ENCODE measurements at regions of chr12 and their contacts with region 1.

Region 1: GRCh38 chr12:112382232-112382796 is at the start of gene HECTD4:
- DNase-seq: peak; percentile 95 to 99 (median 98)
- H3K4me3 ChIP-seq: peak within 1 kb of the TSS; percentile 70 to 99 (median 90)
- H3K27ac ChIP-seq: peak within 1 kb of the TSS; percentile 4 to 95 (median 89)
- H3K27me3 ChIP-seq: no peaks in the 10 kb centered on the region
- CTCF ChIP-seq: peak in 34 of 56 donors; percentile 5 to 53 (median 32)
- total RNA-seq, gene HECTD4: 133 to 246 (median 192) TPM

Region 2: DNA sequence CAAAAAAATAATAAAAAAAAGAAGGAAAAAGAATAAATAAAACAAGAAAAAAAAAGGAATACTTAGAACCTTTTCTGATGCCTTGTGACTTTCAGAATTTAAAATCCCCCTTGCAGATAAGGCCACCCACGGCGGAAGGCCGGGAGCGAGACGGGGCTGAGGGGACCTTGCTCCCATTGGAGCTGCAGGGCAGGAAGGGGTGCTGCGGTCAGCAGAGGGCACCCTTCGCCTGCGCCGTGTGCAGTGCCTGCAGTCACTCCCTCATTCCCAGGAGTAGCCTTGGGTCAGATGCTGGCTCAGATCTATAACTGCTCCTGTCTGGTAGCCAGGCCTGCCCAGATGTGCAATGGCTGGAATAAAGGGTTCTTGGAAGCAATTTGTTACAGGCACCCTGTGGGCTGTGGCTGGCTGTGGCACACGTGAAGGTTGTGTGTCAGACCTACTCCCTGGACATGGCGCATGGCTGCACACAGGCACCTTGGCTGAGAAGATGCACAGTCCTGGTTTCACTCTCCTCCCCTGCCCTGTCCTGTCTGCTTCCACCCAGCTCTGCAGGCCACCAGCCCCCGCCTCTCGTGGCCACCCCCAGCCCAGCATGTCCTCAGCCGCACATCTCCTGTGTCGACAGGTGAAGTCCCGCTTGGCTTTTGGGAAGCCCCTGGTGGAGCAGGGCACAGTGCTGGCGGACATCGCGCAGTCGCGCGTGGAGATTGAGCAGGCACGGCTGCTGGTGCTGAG is 629.0 kb before region 1 on chr12:
- intact Hi-C with region 1: loop called in 1 of 2 experiments (anchors 10 kb)
- DNase-seq: peak in 8 of 10 donors; percentile 47 to 76 (median 57)
- H3K4me3 ChIP-seq: no peak overlapping the region
- H3K27ac ChIP-seq: peak overlapping the region in 11 of 59 donors; percentile 0 to 63 (median 32)
- H3K27me3 ChIP-seq: no peaks in the 10 kb centered on the region
- CTCF ChIP-seq: peak; percentile 21 to 92 (median 76)

Region 3: DNA sequence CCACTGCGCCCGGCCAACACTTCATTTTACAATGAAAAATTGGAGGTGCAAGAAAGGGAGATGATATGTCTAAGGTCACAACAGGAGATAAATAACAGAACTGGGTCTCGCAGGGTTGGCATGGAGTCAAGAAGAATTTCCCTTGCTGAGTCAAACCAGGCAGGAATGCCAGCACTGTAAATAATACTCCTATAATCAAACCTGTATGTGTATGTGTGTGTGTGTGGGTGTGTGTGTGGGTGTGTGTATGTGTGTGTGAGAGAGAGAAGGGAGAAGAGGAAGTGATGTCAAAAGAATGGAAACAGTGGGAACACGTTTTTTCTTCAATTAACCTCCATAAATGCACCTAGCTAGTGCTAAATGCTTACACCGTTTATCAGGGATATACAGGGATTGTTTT is 439.8 kb before region 1 on chr12:
- intact Hi-C with region 1: loop called (anchors 5 to 10 kb)
- DNase-seq: no peak
- H3K4me3 ChIP-seq: no peak overlapping the region
- H3K27ac ChIP-seq: no peak overlapping the region
- H3K27me3 ChIP-seq: no peaks in the 10 kb centered on the region
- CTCF ChIP-seq: no peak

Region 4: DNA sequence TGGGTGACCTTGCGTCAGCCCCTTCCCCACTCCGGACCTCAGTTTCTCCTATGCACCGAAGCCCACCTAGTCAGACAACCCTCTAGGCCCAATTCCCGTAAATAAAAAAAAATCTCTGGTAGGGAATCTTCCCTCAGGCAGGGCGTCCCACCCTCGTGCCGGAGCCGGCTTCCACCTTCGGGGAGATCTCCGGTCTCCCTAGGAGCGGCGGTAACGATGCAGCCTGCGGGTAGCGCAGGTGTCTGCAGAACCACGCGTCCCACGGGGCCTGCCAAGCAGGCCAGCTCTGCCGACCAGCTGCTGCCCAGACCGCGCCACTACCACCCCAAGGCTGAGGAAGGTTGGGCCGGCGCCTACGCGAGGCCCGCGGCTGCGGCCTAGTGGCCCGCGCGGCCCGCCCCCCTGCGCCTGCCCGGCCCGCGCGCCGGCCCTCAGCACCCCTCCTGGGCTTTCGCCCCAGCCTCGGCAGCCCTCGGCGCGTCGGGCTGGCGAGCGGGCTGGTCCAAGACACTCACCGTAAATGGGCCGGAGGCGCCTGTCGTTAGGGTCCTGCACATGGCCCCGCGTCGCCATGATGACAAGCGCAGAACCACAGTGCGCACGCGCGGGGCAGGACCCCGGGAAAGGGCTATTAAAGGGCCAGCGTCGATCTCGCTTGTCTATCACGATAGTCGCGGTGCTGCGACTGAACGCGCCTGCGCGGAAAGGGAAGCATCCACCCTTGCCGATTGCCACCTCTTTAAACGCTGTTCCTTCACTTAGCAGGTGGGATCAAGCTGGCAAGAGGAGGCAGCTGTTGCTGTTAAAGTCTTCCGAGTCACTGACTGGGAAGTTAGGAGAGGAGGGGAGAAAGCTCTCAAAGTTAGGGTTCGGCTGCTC is 273.9 kb before region 1 on chr12 and contains the start of gene NAA25:
- intact Hi-C with region 1: loop called (anchors 2 to 5 kb)
- DNase-seq: peak; percentile 83 to 91 (median 86)
- H3K4me3 ChIP-seq: peak within 1 kb of the TSS; percentile 67 to 99 (median 87)
- H3K27ac ChIP-seq: peak within 1 kb of the TSS; percentile 75 to 98 (median 94)
- H3K27me3 ChIP-seq: no peaks in the 10 kb centered on the region
- CTCF ChIP-seq: peak in 2 of 56 donors; percentile 6 to 12
- total RNA-seq, gene NAA25: 24.6 to 79.2 (median 44.6) TPM

Region 5: DNA sequence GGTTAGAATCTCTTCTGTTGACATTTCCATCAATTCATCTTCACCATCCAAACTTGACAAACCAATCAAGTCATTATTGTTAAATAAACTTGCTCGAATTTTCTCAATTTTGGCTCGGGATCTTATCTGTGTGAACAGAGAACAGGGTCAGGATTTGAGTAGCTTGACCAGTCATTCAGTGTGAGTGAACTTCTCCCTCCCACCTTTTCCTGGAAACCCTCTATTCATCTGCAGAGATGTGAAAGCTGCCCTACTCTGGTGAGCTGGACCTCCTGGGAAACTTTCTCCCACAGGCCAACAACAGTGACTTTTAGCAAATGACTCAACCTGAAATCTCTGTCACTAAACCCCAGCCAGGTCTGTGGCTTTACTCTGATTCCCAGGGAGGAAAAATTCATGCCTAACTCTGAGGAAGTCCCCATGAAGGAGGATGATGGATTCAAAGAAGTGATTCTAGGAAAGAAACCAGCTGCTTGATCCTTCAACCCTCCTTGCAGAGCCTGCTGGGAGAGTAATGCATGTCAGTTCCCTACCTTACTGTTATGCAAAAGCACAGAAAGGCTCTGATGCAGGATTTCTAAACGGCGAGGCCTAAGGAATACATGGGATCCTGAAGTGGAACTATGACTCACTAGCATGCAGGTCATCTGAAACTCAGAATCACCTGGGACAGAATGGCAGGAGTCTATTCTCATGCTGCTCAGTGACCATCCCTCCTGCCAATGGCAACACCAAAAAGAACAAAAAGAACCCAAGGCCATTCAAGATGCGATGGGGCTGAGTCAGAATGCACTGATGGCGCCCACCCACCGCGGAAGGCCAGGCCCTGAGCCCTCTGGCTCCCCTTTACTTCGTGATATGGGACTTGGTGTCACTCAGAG is 198.9 kb before region 1 on chr12:
- intact Hi-C with region 1: loop called in 1 of 2 experiments (anchors 5 kb)
- DNase-seq: no peak
- H3K4me3 ChIP-seq: peak overlapping the region in 8 of 59 donors; percentile 0 to 23 (median 11)
- H3K27ac ChIP-seq: peak overlapping the region; percentile 57 to 99 (median 94)
- H3K27me3 ChIP-seq: no peaks in the 10 kb centered on the region
- CTCF ChIP-seq: no peak